ENCODE measurements at regions of chr22 and their contacts with region 1.

Region 1: DNA sequence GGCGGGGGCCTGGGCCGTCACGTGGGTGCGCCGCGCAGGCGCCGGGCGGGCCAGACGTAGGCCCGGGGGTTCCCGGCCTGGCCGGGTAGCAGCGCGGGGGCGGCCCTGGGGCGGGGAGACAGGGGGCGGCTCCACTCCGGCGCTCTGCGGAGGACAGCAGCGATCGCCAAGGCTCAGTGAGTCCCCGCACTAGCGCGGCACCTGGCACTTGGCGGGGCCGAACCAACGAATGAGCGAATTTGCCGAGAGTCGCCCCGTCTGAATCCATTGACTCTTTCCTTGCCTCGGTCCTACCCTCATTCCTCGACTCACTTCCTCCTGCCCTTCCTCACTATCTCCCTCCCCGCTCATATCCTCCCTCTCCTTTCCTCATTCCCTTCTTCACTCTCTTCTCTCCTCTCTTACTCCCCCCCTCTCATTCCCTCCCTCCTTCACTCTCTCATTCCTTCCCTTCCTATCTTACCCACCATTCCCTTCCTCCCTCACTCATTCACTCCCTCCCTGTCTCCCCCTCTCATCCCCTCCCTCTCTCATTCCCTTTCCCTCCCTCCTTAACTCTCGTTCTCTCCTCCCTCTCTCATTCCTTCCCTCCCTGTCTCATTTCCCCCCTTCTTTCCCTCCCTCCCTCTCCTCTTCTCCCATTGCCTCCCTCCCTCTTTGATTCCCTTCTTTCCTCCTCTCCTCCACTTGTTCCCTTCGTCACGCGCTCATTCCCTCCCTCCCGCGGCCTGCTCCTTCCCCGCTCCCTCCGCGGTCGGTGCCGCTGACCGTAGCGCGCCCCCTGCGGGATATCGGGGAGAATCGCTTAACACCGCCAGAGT is 476 bp upstream of the KLHL22 start:
- DNase-seq: peak; percentile 95
- H3K4me3 ChIP-seq: peak overlapping the region; percentile 71
- H3K27ac ChIP-seq: peak overlapping the region; percentile 85
- H3K4me1 ChIP-seq: peaks cover 9% of the 10 kb centered on the region
- H3K27me3 ChIP-seq: no peaks in the 10 kb centered on the region
- CTCF ChIP-seq: peak; percentile 98

Region 2: GRCh38 chr22:20430720-20431510 is 65.2 kb before region 1 on chr22:
- CTCF ChIA-PET with region 1: no interaction called
- POLR2A ChIA-PET with region 1: no interaction called
- intact Hi-C with region 1: loop called (anchors 5 kb)
- DNase-seq: peak; percentile 87
- H3K4me3 ChIP-seq: peak overlapping the region; percentile 38
- H3K27ac ChIP-seq: no peak overlapping the region
- H3K4me1 ChIP-seq: no peaks in the 10 kb centered on the region
- H3K27me3 ChIP-seq: no peaks in the 10 kb centered on the region
- CTCF ChIP-seq: peak; percentile 64

Region 3: DNA sequence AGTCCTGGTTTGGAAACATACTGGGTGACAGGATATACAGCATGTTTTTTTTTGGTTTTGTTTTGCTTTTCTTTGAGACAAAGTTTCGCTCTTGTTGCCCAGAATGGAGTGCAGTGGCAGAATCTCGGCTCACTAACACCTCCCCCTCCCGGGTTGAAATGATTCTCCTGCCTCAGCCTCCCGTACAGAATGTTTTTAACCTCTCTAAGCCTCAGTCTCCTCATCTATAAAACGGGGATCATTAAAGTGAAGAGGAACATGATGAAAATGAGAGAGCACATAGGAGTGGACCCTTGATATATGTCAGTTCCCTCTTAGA is 30.4 kb before region 1 on chr22:
- CTCF ChIA-PET with region 1: interaction called, 14 read pairs
- POLR2A ChIA-PET with region 1: no interaction called
- intact Hi-C with region 1: no loop called
- DNase-seq: no peak
- H3K4me3 ChIP-seq: no peak overlapping the region
- H3K27ac ChIP-seq: no peak overlapping the region
- H3K4me1 ChIP-seq: no peaks in the 10 kb centered on the region
- H3K27me3 ChIP-seq: no peaks in the 10 kb centered on the region
- CTCF ChIP-seq: no peak